GM12878 (cell line): ENCODE measurements at regions of chr1 and their contacts with region 1.

Region 1: DNA sequence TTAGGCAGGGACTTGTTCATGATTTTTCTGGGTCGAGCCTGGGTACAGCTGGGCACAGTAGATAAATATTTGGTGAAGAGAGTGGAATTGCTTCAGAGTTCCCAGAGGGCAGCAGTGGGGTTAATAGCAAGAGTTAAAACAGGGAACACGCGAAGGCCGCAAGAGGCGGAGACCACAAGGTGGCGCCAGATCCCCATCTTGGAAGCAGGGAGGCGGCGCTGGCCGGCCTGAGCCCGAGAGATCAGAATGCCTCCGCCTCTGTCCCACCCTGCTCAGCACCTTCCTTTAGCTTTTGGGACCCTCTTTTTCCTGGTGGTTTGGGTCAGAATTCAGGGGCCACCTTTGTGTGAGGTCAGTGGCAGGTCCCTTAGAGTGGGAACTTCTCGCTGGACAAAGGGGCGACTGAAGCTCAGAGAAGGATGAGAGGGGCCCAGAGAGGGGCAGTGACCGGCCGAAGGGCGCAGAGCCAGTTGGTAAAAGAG is 6.5 kb upstream of the PADI2 start:
- DNase-seq: no peak
- ATAC-seq: peak; percentile 90
- H3K4me3 ChIP-seq: no peak overlapping the region
- H3K27ac ChIP-seq: no peak overlapping the region
- H3K4me1 ChIP-seq: no peaks in the 10 kb centered on the region; the same call in 1 of the 2 replicates
- H3K27me3 ChIP-seq: no peaks in the 10 kb centered on the region
- CTCF ChIP-seq: peak; percentile 85 to 96 (median 96)
- EP300 ChIP-seq: no peak
- POLR2A ChIP-seq: no peak
- RAD21 ChIP-seq: peak; percentile 93

Region 2: GRCh38 chr1:17059739-17060460 is 65.9 kb before region 1 on chr1:
- CTCF ChIA-PET with region 1: interaction called, 171 read pairs
- POLR2A ChIA-PET with region 1: interaction called, 3 read pairs
- RAD21 ChIA-PET with region 1: interaction called, 53 read pairs
- SMC1A ChIA-PET with region 1: interaction called, 93 read pairs
- in situ Hi-C with region 1: no loop called
- intact Hi-C with region 1: loop called (anchors 1 kb)
- DNase-seq: peak; percentile 30
- ATAC-seq: peak; percentile 100
- H3K4me3 ChIP-seq: no peak overlapping the region
- H3K27ac ChIP-seq: no peak overlapping the region
- H3K4me1 ChIP-seq: peaks cover 6% of the 10 kb centered on the region; the same call in 1 of the 2 replicates
- H3K27me3 ChIP-seq: no peaks in the 10 kb centered on the region
- CTCF ChIP-seq: peak; percentile 80 to 93 (median 81)
- EP300 ChIP-seq: no peak
- POLR2A ChIP-seq: no peak
- RAD21 ChIP-seq: peak; percentile 66

Region 3: DNA sequence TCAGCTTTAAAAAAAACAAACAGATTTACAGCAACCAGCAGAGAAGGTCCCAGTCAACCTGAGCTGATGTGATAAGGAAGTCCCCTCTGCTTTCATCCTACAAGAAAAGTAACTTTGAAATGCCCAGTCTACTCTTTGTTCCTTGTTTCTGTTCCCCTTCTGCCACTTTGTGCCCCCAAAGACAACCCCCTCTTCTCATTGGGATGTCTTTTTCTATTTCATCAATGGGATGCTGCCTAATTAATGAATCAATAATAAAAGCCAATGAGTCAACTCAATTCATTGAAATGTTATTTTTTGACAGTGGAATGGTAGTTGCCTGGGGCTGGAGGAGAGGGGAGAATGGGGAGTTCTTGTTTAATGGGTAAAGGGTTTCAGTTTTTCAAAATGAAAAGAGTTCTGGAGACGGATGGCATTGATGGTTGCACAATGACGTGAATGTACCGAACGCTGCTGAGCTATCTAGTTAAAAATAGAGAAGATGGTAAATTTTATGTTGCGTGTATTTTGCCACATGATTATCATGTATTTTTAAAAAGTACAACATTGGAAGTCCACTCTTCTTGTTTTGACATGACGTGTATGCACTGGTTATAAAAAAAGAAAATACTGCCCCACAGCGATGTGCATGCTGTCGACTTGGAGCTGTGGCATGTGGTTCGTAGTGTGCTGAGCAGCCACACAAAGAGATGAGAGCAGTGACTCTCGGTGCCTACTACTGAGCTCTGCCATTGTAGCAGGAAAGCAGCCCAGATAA is 15.8 kb after region 1 on chr1:
- CTCF ChIA-PET with region 1: interaction called, 105 read pairs
- POLR2A ChIA-PET with region 1: interaction called, 23 read pairs
- RAD21 ChIA-PET with region 1: interaction called, 58 read pairs
- SMC1A ChIA-PET with region 1: interaction called, 119 read pairs
- in situ Hi-C with region 1: no loop called
- intact Hi-C with region 1: no loop called
- DNase-seq: peak; percentile 85
- ATAC-seq: peak; percentile 90
- H3K4me3 ChIP-seq: no peak overlapping the region
- H3K27ac ChIP-seq: peak overlapping the region; percentile 78
- H3K4me1 ChIP-seq: peaks cover 15% of the 10 kb centered on the region
- H3K27me3 ChIP-seq: no peaks in the 10 kb centered on the region
- CTCF ChIP-seq: peak in 1 of 3 experiments; percentile 32; a peak in 1 of 6 replicates
- EP300 ChIP-seq: peak; percentile 45 to 84; a peak in 2 of 4 replicates
- POLR2A ChIP-seq: no peak; the same call in 1 of the 2 replicates
- RAD21 ChIP-seq: 0 out of 2 replicates have a peak, but pooled peaks have one; percentile 5

Region 4: GRCh38 chr1:17236779-17237560 is 111.2 kb after region 1 on chr1:
- CTCF ChIA-PET with region 1: interaction called, 315 read pairs
- POLR2A ChIA-PET with region 1: interaction called, 3 read pairs
- RAD21 ChIA-PET with region 1: interaction called, 186 read pairs
- SMC1A ChIA-PET with region 1: interaction called, 236 read pairs
- in situ Hi-C with region 1: loop called (anchors 5 kb)
- intact Hi-C with region 1: loop called (anchors 1 kb)
- DNase-seq: peak; percentile 31
- ATAC-seq: peak; percentile 93
- H3K4me3 ChIP-seq: no peak overlapping the region
- H3K27ac ChIP-seq: no peak overlapping the region
- H3K4me1 ChIP-seq: no peaks in the 10 kb centered on the region
- H3K27me3 ChIP-seq: peaks cover 0 to 2% of the 10 kb centered on the region in 2 experiments; a peak in 1 of 4 replicates
- CTCF ChIP-seq: peak; percentile 78 to 92 (median 82)
- EP300 ChIP-seq: no peak
- POLR2A ChIP-seq: no peak
- RAD21 ChIP-seq: peak; percentile 95

Region 5: DNA sequence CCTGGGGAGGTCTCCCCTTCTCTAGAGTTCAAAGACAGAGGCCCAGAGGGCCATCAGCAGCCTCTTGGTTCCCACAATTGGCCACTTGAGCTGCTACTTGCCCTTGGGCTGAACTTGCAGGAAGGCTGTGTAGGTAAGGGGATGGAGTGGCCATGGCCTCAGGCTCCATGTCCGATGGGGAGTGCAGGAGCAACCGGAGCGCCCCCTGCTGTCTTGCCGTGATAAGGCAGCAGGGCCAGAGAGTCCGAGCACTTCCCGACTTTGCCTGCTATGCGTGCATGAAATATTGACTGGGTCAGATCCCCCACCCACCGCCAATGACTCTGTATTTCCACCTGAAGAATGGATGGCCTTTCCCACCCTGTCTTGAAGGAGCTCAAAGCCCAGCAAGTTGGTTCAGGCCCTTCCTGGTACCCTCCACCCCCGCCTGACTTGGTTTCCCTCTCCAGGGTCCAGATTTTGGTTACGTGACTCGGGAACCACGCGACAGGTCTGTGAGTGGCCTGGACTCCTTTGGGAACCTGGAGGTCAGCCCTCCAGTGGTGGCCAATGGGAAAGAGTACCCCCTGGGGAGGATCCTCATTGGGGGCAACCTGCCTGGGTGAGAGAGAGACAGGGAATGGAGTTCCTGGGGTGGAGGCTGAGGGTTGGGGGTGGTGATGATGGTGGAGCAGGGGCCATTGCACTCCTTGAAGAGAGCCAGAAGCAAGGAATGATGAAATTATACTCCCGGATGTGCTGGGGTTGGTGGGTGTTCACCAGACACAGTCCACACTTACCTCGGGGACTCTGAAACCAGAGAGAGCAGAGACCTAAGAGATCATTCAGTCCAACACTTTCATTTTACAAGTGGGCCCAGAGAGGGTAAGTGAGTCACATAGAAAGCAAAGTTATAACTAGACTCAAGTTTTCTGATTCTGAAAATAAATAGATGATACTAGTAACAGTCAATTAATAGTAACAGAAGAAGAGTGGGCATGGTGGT is 148.7 kb after region 1 on chr1:
- CTCF ChIA-PET with region 1: interaction called, 10 read pairs
- POLR2A ChIA-PET with region 1: no interaction called
- RAD21 ChIA-PET with region 1: interaction called, 6 read pairs
- SMC1A ChIA-PET with region 1: interaction called, 6 read pairs
- in situ Hi-C with region 1: no loop called
- intact Hi-C with region 1: no loop called
- DNase-seq: peak; percentile 11
- ATAC-seq: peak; percentile 89
- H3K4me3 ChIP-seq: peak overlapping the region; percentile 32; the same call in 1 of the 2 replicates
- H3K27ac ChIP-seq: peak overlapping the region; percentile 32; the same call in 1 of the 2 replicates
- H3K4me1 ChIP-seq: peaks cover 10% of the 10 kb centered on the region
- H3K27me3 ChIP-seq: no peaks in the 10 kb centered on the region
- CTCF ChIP-seq: peak; percentile 56 to 84 (median 69)
- EP300 ChIP-seq: no peak
- POLR2A ChIP-seq: no peak
- RAD21 ChIP-seq: no peak